Activated CD8-positive, alpha-beta T cell treated with anti-CD3 and anti-CD28 coated beads for 36 hours (primary cell): ENCODE measurements at regions of chr18 and their contacts with region 1.

Region 1: GRCh38 chr18:3585656-3586509 is 135.9 kb downstream of the TGIF1 start:
- DNase-seq: peak; percentile 85
- ATAC-seq: peak; percentile 85
- H3K4me3 Mint-ChIP-seq: no peak overlapping the region
- H3K27ac Mint-ChIP-seq: no peak overlapping the region
- H3K4me1 Mint-ChIP-seq: peaks cover 25% of the 10 kb centered on the region
- H3K27me3 Mint-ChIP-seq: no peaks in the 10 kb centered on the region
- CTCF ChIP-seq: peak; percentile 82

Region 2: DNA sequence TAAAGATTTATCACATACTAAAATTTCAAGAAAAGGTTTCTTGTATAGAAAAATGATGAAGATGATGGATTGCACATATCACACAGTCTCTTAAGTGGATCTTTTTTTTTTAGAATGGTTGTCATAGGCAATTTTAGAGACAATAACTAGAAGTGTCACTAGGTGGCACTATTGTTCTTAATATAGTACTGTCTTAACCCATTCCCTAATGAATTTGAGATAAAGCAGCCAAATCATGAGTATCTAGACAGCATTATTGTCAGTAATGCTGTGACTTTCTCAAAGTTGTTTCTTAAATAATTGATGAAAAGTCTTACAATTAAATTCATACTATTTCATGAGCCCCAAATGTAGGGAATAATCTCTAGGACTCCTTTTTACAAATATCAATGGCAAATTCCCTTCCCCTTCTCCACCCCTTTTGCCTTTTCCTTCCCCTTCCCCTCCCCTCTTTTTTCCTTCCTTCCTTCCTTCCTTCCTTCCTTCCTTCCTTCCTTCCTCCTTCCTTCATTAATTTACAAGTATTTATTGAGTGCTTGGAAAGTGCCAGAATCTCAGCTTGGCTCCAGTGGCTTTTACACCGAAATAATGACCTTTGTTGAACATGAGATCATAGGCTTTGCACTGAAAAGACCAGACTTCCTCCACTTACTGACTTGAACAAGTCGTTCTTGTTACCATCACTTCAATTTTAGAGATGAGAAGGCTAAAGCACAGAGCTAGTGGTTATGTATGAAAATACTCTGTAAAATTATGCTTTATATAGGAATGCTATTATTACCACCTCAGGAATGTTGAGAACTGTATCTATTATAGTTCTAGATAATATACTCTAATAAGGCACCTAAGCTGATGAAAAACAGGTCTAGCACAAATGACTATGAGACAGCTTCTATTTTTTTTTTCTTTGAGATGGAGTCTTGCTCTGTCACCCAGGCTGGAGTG is 304.2 kb before region 1 on chr18:
- CTCF ChIA-PET with region 1: interaction called, 22 read pairs
- POLR2A ChIA-PET with region 1: interaction called, 3 read pairs
- intact Hi-C with region 1: loop called (anchors 5 kb)
- DNase-seq: no peak
- ATAC-seq: peak; percentile 88
- H3K4me3 Mint-ChIP-seq: no peak overlapping the region
- H3K27ac Mint-ChIP-seq: no peak overlapping the region
- H3K4me1 Mint-ChIP-seq: peaks cover 9% of the 10 kb centered on the region
- H3K27me3 Mint-ChIP-seq: no peaks in the 10 kb centered on the region
- CTCF ChIP-seq: peak; percentile 76

Region 3: GRCh38 chr18:3297025-3297984 is 288.6 kb before region 1 on chr18:
- CTCF ChIA-PET with region 1: interaction called, 20 read pairs
- POLR2A ChIA-PET with region 1: interaction called, 4 read pairs
- intact Hi-C with region 1: no loop called
- DNase-seq: peak; percentile 99
- ATAC-seq: peak; percentile 99
- H3K4me3 Mint-ChIP-seq: peak overlapping the region; percentile 92
- H3K27ac Mint-ChIP-seq: peak overlapping the region; percentile 86
- H3K4me1 Mint-ChIP-seq: peaks cover 5% of the 10 kb centered on the region
- H3K27me3 Mint-ChIP-seq: peaks cover 24% of the 10 kb centered on the region
- CTCF ChIP-seq: peak; percentile 83

Region 4: DNA sequence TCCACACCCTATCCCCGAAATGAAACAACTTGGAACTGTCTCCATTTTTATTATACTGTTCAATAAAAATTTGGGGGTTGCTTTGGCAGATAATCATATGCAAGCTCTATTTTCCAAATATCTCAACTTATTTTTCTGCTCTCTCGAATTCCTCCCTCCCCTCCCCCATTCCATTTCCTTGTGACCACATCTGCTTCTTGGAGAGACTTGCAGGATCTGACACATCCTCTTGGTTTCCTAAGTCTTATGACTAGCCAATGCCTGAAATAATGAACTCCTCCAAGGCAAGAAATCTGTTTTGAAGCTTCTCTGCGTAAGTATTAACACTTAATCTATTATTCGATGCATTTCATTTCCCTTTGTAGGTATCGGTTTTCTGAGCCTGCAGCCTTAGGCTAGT is 119.8 kb before region 1 on chr18:
- CTCF ChIA-PET with region 1: interaction called, 13 read pairs
- POLR2A ChIA-PET with region 1: no interaction called
- intact Hi-C with region 1: no loop called
- DNase-seq: no peak
- ATAC-seq: no peak
- H3K4me3 Mint-ChIP-seq: no peak overlapping the region
- H3K27ac Mint-ChIP-seq: no peak overlapping the region
- H3K4me1 Mint-ChIP-seq: peaks cover 26% of the 10 kb centered on the region
- H3K27me3 Mint-ChIP-seq: no peaks in the 10 kb centered on the region
- CTCF ChIP-seq: no peak

Region 5: GRCh38 chr18:3472681-3473544 is 113.0 kb before region 1 on chr18:
- CTCF ChIA-PET with region 1: interaction called, 10 read pairs
- POLR2A ChIA-PET with region 1: no interaction called
- intact Hi-C with region 1: no loop called
- DNase-seq: peak; percentile 21
- ATAC-seq: peak; percentile 89
- H3K4me3 Mint-ChIP-seq: no peak overlapping the region
- H3K27ac Mint-ChIP-seq: peak overlapping the region; percentile 5
- H3K4me1 Mint-ChIP-seq: peaks cover 8% of the 10 kb centered on the region
- H3K27me3 Mint-ChIP-seq: peaks cover 1% of the 10 kb centered on the region
- CTCF ChIP-seq: no peak